Activated CD4-positive, alpha-beta memory T cell treated with anti-CD3 and anti-CD28 coated beads for 36 hours (primary cell): ENCODE measurements at regions of chr1 and their contacts with region 1.

Region 1: GRCh38 chr1:161382214-161383019 is 14.7 kb upstream of the CFAP126 start:
- DNase-seq: no peak
- H3K4me3 Mint-ChIP-seq: no peak overlapping the region
- H3K27ac Mint-ChIP-seq: peak overlapping the region; percentile 42
- H3K4me1 Mint-ChIP-seq: peaks cover 19% of the 10 kb centered on the region
- H3K27me3 Mint-ChIP-seq: no peaks in the 10 kb centered on the region

Region 2: DNA sequence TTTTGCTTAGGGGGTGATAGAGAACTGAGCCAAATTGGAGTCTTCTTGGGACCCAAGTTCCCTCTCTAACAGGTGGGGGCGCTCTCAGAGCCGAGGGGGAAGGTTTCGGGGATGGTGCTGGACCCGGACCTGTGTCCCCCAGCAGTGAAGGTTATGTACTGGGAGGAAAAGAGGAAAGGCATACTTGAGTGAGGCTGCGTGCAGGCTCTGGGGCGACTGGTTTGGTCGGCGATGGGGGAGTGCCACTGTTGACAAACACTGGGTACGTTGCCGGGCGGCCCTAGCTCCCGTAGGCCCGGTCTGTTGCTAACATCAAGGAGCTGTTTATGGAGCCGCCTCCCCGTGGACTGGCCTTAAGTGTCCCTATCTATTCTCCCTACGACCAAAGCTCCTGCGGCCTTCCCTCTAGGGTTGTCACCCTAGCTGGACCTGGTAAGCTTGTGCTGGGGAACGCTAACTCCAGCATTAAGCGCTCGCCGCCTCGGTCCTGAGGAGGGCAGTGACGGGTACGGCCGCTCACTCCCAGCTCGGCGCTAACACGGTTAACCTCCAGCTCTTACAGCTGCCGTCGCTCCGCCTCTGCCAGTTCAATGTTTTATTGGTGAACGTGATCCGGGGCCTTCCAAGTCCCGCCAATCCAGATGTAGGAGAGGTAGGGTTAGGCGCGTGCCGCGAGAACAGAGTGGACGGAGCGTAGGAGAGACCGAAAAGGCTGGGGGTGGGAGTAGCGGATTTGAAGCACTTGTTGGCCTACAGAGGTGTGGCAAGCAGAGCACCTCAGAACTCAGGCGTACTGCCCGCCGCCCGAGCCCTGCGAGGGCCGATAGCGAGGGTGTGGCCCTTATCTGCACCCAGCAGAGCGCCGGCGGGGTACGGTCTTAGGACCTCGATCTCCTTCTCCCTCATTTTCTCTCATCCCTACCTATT is 216.4 kb before region 1 on chr1 and contains the start of gene PPOX:
- CTCF ChIA-PET with region 1: interaction called, 18 read pairs
- POLR2A ChIA-PET with region 1: no interaction called
- intact Hi-C with region 1: no loop called
- DNase-seq: peak; percentile 97
- H3K4me3 Mint-ChIP-seq: peak within 1 kb of the TSS; percentile 86
- H3K27ac Mint-ChIP-seq: peak within 1 kb of the TSS; percentile 93
- H3K4me1 Mint-ChIP-seq: peaks cover 48% of the 10 kb centered on the region
- H3K27me3 Mint-ChIP-seq: no peaks in the 10 kb centered on the region
- total RNA-seq, gene PPOX: 27.0 to 30.7 TPM

Region 3: GRCh38 chr1:161192476-161193465 is 189.6 kb before region 1 on chr1:
- CTCF ChIA-PET with region 1: interaction called, 18 read pairs
- POLR2A ChIA-PET with region 1: no interaction called
- intact Hi-C with region 1: no loop called
- DNase-seq: peak; percentile 81
- H3K4me3 Mint-ChIP-seq: no peak overlapping the region
- H3K27ac Mint-ChIP-seq: peak overlapping the region; percentile 42
- H3K4me1 Mint-ChIP-seq: peaks cover 29% of the 10 kb centered on the region
- H3K27me3 Mint-ChIP-seq: no peaks in the 10 kb centered on the region

Region 4: DNA sequence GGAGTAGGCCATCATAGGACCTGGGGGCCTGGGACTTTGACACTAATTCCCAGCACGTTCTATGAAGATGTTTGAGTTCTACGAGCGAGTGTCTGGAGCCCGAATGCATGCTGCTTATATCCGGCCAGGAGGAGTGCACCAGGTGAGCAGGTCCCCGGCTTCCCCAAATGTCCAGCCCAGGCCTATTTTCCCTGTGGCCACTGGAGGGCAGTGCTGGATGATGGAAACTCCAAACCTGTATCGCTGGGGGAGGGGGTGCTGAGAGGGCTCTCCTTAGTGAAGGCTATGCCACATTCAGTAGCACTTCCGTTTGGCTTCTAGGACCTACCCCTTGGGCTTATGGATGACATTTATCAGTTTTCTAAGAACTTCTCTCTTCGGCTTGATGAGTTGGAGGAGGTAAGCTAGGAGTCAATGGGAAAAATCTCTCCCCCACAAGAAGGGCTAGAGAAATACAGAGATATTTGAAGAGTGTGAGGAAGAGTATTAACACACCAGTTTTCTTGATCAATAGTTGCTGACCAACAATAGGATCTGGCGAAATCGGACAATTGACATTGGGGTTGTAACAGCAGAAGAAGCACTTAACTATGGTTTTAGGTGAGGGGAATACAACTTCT is 172.5 kb before region 1 on chr1:
- CTCF ChIA-PET with region 1: interaction called, 38 read pairs
- POLR2A ChIA-PET with region 1: no interaction called
- intact Hi-C with region 1: no loop called
- DNase-seq: peak; percentile 83
- H3K4me3 Mint-ChIP-seq: no peak overlapping the region
- H3K27ac Mint-ChIP-seq: peak overlapping the region; percentile 5
- H3K4me1 Mint-ChIP-seq: peaks cover 21% of the 10 kb centered on the region
- H3K27me3 Mint-ChIP-seq: no peaks in the 10 kb centered on the region

Region 5: DNA sequence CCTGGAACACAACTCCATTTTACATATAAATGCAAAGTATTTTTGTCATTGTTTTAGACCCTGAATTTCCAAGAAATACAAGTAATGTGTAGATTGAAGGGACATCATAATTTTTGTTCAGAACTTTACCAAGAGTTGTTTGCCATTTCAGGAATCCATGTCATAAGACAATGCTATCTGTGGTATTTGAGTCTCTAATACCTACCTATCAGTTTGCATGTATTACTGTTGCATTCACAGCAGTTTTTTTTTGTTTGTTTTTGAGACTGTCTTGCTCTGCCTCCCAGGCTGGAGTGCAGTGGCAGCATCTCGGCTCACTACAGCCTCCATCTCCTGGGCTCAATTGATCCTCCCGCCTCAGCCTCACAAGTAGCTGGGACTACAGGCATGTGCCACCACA is 89.8 kb before region 1 on chr1:
- CTCF ChIA-PET with region 1: interaction called, 22 read pairs
- POLR2A ChIA-PET with region 1: no interaction called
- intact Hi-C with region 1: no loop called
- DNase-seq: no peak
- H3K4me3 Mint-ChIP-seq: no peak overlapping the region
- H3K27ac Mint-ChIP-seq: no peak overlapping the region
- H3K4me1 Mint-ChIP-seq: no peaks in the 10 kb centered on the region
- H3K27me3 Mint-ChIP-seq: no peaks in the 10 kb centered on the region

Region 6: GRCh38 chr1:161324020-161324419 is 58.4 kb before region 1 on chr1:
- CTCF ChIA-PET with region 1: interaction called, 10 read pairs
- POLR2A ChIA-PET with region 1: no interaction called
- intact Hi-C with region 1: no loop called
- DNase-seq: no peak
- H3K4me3 Mint-ChIP-seq: no peak overlapping the region
- H3K27ac Mint-ChIP-seq: no peak overlapping the region
- H3K4me1 Mint-ChIP-seq: peaks cover 5% of the 10 kb centered on the region
- H3K27me3 Mint-ChIP-seq: no peaks in the 10 kb centered on the region

Region 7: GRCh38 chr1:161367684-161368400 is 14.6 kb before region 1 on chr1 and contains the start of gene CFAP126:
- CTCF ChIA-PET with region 1: interaction called, 25 read pairs
- POLR2A ChIA-PET with region 1: no interaction called
- intact Hi-C with region 1: no loop called
- DNase-seq: peak; percentile 66
- H3K4me3 Mint-ChIP-seq: no peak within 1 kb of the TSS
- H3K27ac Mint-ChIP-seq: peak within 1 kb of the TSS; percentile 49
- H3K4me1 Mint-ChIP-seq: peaks cover 22% of the 10 kb centered on the region
- H3K27me3 Mint-ChIP-seq: no peaks in the 10 kb centered on the region
- total RNA-seq, gene CFAP126: 0.29 TPM in 1 of 2 experiments, not detected in the other

Region 8: DNA sequence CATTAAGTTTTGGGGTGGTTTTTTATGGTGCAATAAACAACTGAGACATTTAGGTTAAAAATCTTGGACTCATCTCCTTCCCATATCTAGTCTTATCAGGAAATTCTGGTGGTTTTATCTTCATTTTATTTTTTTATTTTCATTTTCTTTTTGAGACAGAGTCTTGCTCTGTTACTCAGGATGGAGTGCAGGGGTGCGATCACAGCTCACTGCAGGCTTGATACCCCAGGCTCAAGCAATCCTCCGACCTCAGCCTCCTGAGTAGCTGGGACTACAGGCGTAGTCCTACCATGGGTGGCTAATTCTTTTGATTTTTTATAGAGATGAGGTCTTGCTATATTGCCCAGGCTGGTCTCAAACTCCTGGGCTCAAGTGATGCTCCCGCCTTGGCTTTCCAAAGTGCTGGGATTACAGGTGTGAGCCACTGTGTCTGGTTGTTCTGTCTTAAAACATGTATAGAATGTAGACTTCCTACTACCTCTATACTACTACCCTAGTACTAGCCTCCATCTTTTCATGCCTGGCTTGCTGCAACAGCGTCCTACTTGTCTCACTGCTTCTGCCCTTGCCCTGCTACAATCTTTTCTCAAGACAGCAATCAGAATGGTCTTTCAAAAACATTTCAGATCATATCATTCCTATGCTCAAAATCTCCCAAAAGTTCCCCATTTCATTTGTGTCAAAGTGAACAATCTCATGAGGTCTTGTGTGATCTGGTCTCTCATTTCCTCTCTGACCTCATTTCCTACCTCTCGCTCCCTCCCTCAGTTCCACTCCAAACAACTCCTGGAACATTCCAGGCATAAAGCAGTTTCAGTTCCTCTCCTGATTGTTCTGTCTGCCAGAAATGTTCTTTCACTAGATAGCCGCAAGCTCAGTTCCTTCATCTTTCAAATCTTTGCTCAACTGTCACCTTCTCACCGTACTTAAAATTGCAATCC is 117.0 kb after region 1 on chr1:
- CTCF ChIA-PET with region 1: no interaction called
- POLR2A ChIA-PET with region 1: no interaction called
- intact Hi-C with region 1: no loop called
- DNase-seq: no peak
- H3K4me3 Mint-ChIP-seq: no peak overlapping the region
- H3K27ac Mint-ChIP-seq: no peak overlapping the region
- H3K4me1 Mint-ChIP-seq: peaks cover 7% of the 10 kb centered on the region
- H3K27me3 Mint-ChIP-seq: peaks cover 4% of the 10 kb centered on the region

Region 9: DNA sequence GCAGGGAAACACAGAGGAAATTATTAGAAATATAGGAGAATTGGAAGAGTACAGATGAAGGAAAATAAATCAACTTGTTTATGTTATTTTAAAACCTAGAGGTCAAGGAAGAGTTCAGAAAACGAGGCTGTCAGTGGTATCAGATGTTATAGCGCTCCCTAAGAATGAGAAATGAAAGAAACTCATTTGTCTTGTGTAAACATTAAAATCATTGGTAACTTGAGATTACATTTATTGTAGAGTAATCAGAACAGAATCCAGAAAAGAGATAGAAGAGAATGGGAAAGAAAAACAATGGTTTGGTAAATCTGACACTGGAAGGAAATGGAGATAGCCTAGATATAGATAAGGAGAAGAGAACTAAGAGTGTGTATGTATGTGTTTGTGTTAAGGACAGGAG is 490.1 kb after region 1 on chr1:
- CTCF ChIA-PET with region 1: no interaction called
- POLR2A ChIA-PET with region 1: no interaction called
- intact Hi-C with region 1: no loop called
- DNase-seq: no peak
- H3K4me3 Mint-ChIP-seq: no peak overlapping the region
- H3K27ac Mint-ChIP-seq: no peak overlapping the region
- H3K4me1 Mint-ChIP-seq: no peaks in the 10 kb centered on the region
- H3K27me3 Mint-ChIP-seq: no peaks in the 10 kb centered on the region